GM12878 (cell line): ENCODE measurements at regions of chr11 and their contacts with region 1.

Region 1: DNA sequence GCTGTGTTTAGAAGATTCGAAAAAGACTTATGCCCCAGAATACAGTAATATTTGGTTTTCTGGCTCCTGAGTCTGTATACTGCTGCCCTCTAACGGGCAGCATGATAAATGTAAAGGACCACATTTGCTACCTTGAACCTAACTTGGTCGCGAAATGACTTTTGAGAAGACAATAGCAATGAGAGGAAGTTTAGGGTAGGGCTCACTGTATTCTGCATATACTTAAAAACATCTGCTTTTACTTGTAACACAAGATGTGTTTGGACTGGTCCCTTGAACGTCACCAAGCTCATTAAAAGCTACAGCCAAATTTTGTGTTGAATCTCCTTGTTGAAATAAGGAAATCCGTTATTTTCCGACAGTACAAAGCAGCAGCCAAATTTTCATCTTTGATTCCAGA is 309.1 kb downstream of the SWAP70 start:
- DNase-seq: no peak
- ATAC-seq: peak; percentile 85
- H3K4me3 ChIP-seq: no peak overlapping the region
- H3K27ac ChIP-seq: no peak overlapping the region
- H3K4me1 ChIP-seq: no peaks in the 10 kb centered on the region
- H3K27me3 ChIP-seq: no peaks in the 10 kb centered on the region
- CTCF ChIP-seq: peak; percentile 62 to 75 (median 75)
- EP300 ChIP-seq: no peak
- POLR2A ChIP-seq: no peak
- RAD21 ChIP-seq: peak; percentile 93

Region 2: GRCh38 chr11:9716275-9717039 is 256.5 kb before region 1 on chr11:
- CTCF ChIA-PET with region 1: no interaction called
- POLR2A ChIA-PET with region 1: no interaction called
- RAD21 ChIA-PET with region 1: no interaction called
- SMC1A ChIA-PET with region 1: no interaction called
- in situ Hi-C with region 1: no loop called
- intact Hi-C with region 1: no loop called
- DNase-seq: peak; percentile 92
- ATAC-seq: peak; percentile 90
- H3K4me3 ChIP-seq: no peak overlapping the region
- H3K27ac ChIP-seq: peak overlapping the region; percentile 65
- H3K4me1 ChIP-seq: peaks cover 58% of the 10 kb centered on the region
- H3K27me3 ChIP-seq: no peaks in the 10 kb centered on the region
- CTCF ChIP-seq: no peak
- EP300 ChIP-seq: peak in 1 of 2 experiments; percentile 87; a peak in 1 of 4 replicates
- POLR2A ChIP-seq: no peak
- RAD21 ChIP-seq: no peak

Region 3: GRCh38 chr11:9861860-9862725 is 110.9 kb before region 1 on chr11:
- CTCF ChIA-PET with region 1: interaction called, 34 read pairs
- POLR2A ChIA-PET with region 1: no interaction called
- RAD21 ChIA-PET with region 1: no interaction called
- SMC1A ChIA-PET with region 1: interaction called, 3 read pairs
- in situ Hi-C with region 1: loop called (anchors 5 kb)
- intact Hi-C with region 1: loop called (anchors 1 kb)
- DNase-seq: peak; percentile 31
- ATAC-seq: peak; percentile 100
- H3K4me3 ChIP-seq: no peak overlapping the region
- H3K27ac ChIP-seq: no peak overlapping the region
- H3K4me1 ChIP-seq: no peaks in the 10 kb centered on the region
- H3K27me3 ChIP-seq: no peaks in the 10 kb centered on the region; a peak in 1 of 4 replicates
- CTCF ChIP-seq: peak; percentile 78 to 89 (median 85)
- EP300 ChIP-seq: no peak
- POLR2A ChIP-seq: no peak
- RAD21 ChIP-seq: peak; percentile 88

Region 4: DNA sequence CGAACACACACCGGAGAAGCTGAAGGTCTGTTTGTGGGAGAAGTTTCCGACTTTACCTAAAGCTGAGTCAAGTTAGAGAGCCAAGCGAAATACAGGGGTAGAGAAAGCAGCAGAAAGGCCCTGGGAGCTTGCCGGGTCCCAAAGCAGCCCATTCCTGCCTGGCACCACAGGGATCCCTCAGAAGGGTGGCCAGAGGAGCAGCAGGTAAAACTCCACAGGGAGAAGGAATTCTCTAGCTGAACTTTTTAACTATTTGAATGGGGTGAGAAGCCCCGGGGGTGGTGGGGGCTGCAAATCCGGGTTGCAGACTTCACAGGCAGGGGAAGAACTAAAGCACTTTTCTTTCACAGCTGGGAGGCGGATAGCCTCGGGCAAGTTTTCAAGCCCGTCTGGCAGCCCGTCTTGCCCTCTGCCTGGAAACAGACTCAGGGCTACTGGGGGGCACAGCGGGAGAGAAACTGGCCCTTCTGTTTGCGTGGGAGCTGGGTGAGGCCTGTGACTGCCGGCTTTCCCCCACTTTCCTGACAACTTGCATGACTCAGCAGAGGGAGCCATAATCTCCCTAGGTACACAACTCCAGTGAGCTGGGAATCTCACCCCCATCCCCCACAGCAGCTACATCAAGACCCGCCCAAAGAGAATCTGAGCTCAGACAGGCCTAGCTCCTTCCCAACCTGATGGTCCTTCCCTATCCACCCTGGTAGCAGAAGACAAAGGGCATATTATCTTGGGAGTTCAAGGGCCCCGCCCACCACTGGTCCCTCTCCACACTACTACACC is 10.0 kb after region 1 on chr11:
- CTCF ChIA-PET with region 1: interaction called, 21 read pairs
- POLR2A ChIA-PET with region 1: no interaction called
- RAD21 ChIA-PET with region 1: interaction called, 3 read pairs
- SMC1A ChIA-PET with region 1: interaction called, 5 read pairs
- in situ Hi-C with region 1: no loop called
- intact Hi-C with region 1: no loop called
- DNase-seq: no peak
- ATAC-seq: no peak
- H3K4me3 ChIP-seq: no peak overlapping the region
- H3K27ac ChIP-seq: no peak overlapping the region
- H3K4me1 ChIP-seq: no peaks in the 10 kb centered on the region
- H3K27me3 ChIP-seq: no peaks in the 10 kb centered on the region
- CTCF ChIP-seq: no peak
- EP300 ChIP-seq: no peak
- POLR2A ChIP-seq: no peak
- RAD21 ChIP-seq: no peak